OCI-LY7 (cell line): ENCODE measurements at regions of chr9 and their contacts with region 1.

Region 1: GRCh38 chr9:122464633-122465567 is 12.8 kb downstream of the OR1J1 start:
- DNase-seq: peak; percentile 83
- H3K4me3 ChIP-seq: peak overlapping the region; percentile 59
- H3K27ac ChIP-seq: no peak overlapping the region
- H3K4me1 ChIP-seq: peaks cover 4% of the 10 kb centered on the region
- CTCF ChIP-seq: peak; percentile 99

Region 2: DNA sequence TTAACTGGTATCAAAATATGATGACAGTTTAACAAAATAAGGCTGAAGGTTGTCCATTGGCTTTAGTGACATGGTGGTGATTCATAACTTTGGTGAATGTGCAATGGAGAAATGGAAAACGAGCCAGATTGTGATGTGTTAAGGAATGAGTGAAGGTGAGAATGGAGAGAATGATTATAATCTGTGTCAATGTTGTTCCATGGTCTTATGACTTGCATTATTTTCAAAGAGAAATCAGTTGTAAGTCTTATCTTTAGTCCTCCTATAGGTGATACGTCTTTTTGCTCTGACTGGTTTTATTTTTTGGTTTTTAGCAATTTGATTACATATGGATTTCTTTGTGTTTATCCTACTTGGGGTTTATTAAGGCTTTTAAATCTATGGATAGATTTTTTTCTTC is 289.9 kb after region 1 on chr9:
- CTCF ChIA-PET with region 1: no interaction called
- POLR2A ChIA-PET with region 1: no interaction called
- intact Hi-C with region 1: no loop called
- DNase-seq: no peak
- H3K4me3 ChIP-seq: no peak overlapping the region
- H3K27ac ChIP-seq: no peak overlapping the region
- H3K4me1 ChIP-seq: no peaks in the 10 kb centered on the region
- CTCF ChIP-seq: no peak

Region 3: DNA sequence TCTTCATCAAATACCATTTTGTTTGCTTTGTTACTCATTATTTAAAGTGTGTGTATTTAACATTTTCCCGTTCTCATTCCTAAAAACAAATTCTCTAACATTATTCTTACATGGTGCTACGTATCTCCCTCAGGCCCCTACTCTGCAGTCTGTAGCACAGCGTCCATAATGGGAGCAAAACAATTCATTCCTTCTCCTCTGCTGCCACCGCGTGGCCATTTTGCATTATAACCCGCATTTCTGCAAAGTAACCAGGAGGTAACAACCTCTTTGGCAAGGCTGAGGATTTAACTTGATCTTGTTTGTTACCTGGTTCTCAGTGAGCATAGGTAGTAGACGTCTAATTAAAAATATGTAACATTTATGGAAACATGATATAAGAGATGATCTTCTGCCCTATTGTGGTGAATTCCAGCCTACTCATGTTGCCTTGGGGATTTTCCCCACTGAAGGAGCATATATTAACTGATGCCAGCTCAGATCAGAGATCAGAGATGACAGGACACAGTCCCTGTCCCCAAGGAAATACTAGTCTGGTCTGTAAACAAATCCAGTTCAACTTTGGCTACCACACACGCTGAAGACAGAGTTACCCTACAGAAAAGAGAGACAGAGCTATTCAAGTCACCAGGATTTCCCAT is 345.5 kb after region 1 on chr9:
- CTCF ChIA-PET with region 1: no interaction called
- POLR2A ChIA-PET with region 1: interaction called, 5 read pairs
- intact Hi-C with region 1: loop called (anchors 1 kb)
- DNase-seq: peak; percentile 79
- H3K4me3 ChIP-seq: no peak overlapping the region
- H3K27ac ChIP-seq: no peak overlapping the region
- H3K4me1 ChIP-seq: no peaks in the 10 kb centered on the region
- CTCF ChIP-seq: peak; percentile 92

Region 4: GRCh38 chr9:122991370-122991830 is 526.5 kb after region 1 on chr9:
- CTCF ChIA-PET with region 1: no interaction called
- POLR2A ChIA-PET with region 1: no interaction called
- intact Hi-C with region 1: loop called (anchors 5 kb)
- DNase-seq: peak; percentile 51
- H3K4me3 ChIP-seq: no peak overlapping the region
- H3K27ac ChIP-seq: no peak overlapping the region
- H3K4me1 ChIP-seq: no peaks in the 10 kb centered on the region
- CTCF ChIP-seq: peak; percentile 95